ENCODE measurements at regions of chr1 and their contacts with region 1.

Region 1: GRCh38 chr1:162886705-162887104 is 25.7 kb upstream of the CCDC190 start:
- DNase-seq: peak; percentile 48
- ATAC-seq: no peak
- H3K4me3 ChIP-seq: no peak overlapping the region
- H3K27ac ChIP-seq: no peak overlapping the region
- H3K4me1 ChIP-seq: no peaks in the 10 kb centered on the region
- H3K27me3 ChIP-seq: no peaks in the 10 kb centered on the region
- CTCF ChIP-seq: no peak
- POLR2A ChIP-seq: no peak
- RAD21 ChIP-seq: no peak

Region 2: GRCh38 chr1:162861101-162861500 is 25.6 kb before region 1 on chr1 and contains the start of gene CCDC190:
- CTCF ChIA-PET with region 1: no interaction called
- POLR2A ChIA-PET with region 1: no interaction called
- dilution Hi-C with region 1: no loop called
- in situ Hi-C with region 1: no loop called
- intact Hi-C with region 1: loop called (anchors 1 kb)
- DNase-seq: no peak
- ATAC-seq: peak; percentile 69
- H3K4me3 ChIP-seq: no peak within 1 kb of the TSS
- H3K27ac ChIP-seq: no peak within 1 kb of the TSS
- H3K4me1 ChIP-seq: peaks cover 1% of the 10 kb centered on the region; the same call in 1 of the 2 replicates
- H3K27me3 ChIP-seq: no peaks in the 10 kb centered on the region
- CTCF ChIP-seq: no peak
- POLR2A ChIP-seq: no peak
- RAD21 ChIP-seq: no peak
- total RNA-seq, gene CCDC190: 0.28 and 0.36 TPM in 2 replicates

Region 3: GRCh38 chr1:162942916-162943567 is 56.3 kb after region 1 on chr1:
- CTCF ChIA-PET with region 1: no interaction called
- POLR2A ChIA-PET with region 1: no interaction called
- dilution Hi-C with region 1: no loop called
- in situ Hi-C with region 1: no loop called
- intact Hi-C with region 1: no loop called
- DNase-seq: peak; percentile 44
- ATAC-seq: peak; percentile 53; the same call in 1 of the 2 replicates
- H3K4me3 ChIP-seq: no peak overlapping the region
- H3K27ac ChIP-seq: no peak overlapping the region
- H3K4me1 ChIP-seq: no peaks in the 10 kb centered on the region; the same call in 1 of the 2 replicates
- H3K27me3 ChIP-seq: no peaks in the 10 kb centered on the region
- CTCF ChIP-seq: no peak
- POLR2A ChIP-seq: no peak
- RAD21 ChIP-seq: no peak

Measured in IMR-90 (cell line).